ENCODE measurements at regions of chr2 and their contacts with region 1.

Region 1: GRCh38 chr2:168210895-168211570 is 36.4 kb downstream of the STK39 start:
- DNase-seq: no peak
- H3K4me3 Mint-ChIP-seq: peak overlapping the region; percentile 41
- H3K27ac Mint-ChIP-seq: peak overlapping the region; percentile 85
- H3K4me1 Mint-ChIP-seq: peaks cover 50% of the 10 kb centered on the region
- H3K27me3 Mint-ChIP-seq: no peaks in the 10 kb centered on the region

Region 2: DNA sequence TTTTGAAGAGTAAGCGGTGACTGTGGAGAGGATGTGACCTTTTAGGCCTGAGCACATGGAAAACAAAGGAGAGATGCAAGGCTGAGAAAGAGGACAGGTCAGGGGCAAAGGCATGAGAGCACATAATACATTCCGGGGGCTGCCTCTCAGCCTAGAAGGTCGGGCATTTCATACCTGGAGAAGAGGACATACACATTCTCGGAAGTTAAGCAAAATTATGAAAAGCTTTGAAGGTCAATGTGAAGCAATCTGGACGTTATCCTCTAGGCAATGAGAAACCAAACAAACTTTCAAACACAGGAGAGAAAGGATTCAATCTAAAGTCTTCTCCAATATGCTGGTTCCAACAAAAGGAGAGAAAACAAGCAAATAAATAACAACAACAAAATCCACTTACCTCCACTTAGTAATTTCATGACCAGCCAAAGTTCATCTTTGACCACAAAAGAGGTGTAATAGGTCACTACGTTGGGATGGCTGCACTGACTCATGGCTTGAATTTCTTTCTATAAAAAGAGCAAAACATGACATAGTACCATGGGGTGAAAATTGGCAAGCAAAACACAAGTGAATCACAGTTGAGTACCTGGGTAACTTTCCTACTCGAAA is 44.0 kb before region 1 on chr2:
- intact Hi-C with region 1: loop called (anchors 1 kb)
- DNase-seq: no peak
- H3K4me3 Mint-ChIP-seq: peak overlapping the region; percentile 5
- H3K27ac Mint-ChIP-seq: peak overlapping the region; percentile 67
- H3K4me1 Mint-ChIP-seq: peaks cover 40% of the 10 kb centered on the region
- H3K27me3 Mint-ChIP-seq: no peaks in the 10 kb centered on the region

Region 3: GRCh38 chr2:168194784-168195522 is 16.1 kb before region 1 on chr2:
- intact Hi-C with region 1: loop called (anchors 1 kb)
- DNase-seq: peak; percentile 75
- H3K4me3 Mint-ChIP-seq: peak overlapping the region; percentile 71
- H3K27ac Mint-ChIP-seq: peak overlapping the region; percentile 92
- H3K4me1 Mint-ChIP-seq: peaks cover 48% of the 10 kb centered on the region
- H3K27me3 Mint-ChIP-seq: no peaks in the 10 kb centered on the region

Region 4: GRCh38 chr2:168233762-168234406 is 22.9 kb after region 1 on chr2:
- intact Hi-C with region 1: loop called (anchors 1 kb)
- DNase-seq: no peak
- H3K4me3 Mint-ChIP-seq: peak overlapping the region; percentile 18
- H3K27ac Mint-ChIP-seq: peak overlapping the region; percentile 60
- H3K4me1 Mint-ChIP-seq: peaks cover 21% of the 10 kb centered on the region
- H3K27me3 Mint-ChIP-seq: no peaks in the 10 kb centered on the region

Region 5: GRCh38 chr2:168455648-168456520 is 244.9 kb after region 1 on chr2 and contains the start of gene CERS6:
- intact Hi-C with region 1: loop called (anchors 10 kb)
- DNase-seq: peak; percentile 96
- H3K4me3 Mint-ChIP-seq: no peak within 1 kb of the TSS
- H3K27ac Mint-ChIP-seq: peak within 1 kb of the TSS; percentile 85
- H3K4me1 Mint-ChIP-seq: peaks cover 25% of the 10 kb centered on the region
- H3K27me3 Mint-ChIP-seq: no peaks in the 10 kb centered on the region
- total RNA-seq, gene CERS6: 25.3 and 26.3 TPM in 2 replicates

Measured in activated CD4-positive, alpha-beta T cell treated with anti-CD3 and anti-CD28 coated beads, Interleukin-2, amount 10 ng/mL, durations not matched to agents 24 days and 14 days (primary cell).